ENCODE measurements at regions of chr5 and their contacts with region 1.

Region 1: GRCh38 chr5:150129813-150130492 is 25.7 kb downstream of the PDGFRB start:
- DNase-seq: no peak
- ATAC-seq: peak; percentile 93
- H3K4me3 ChIP-seq: no peak overlapping the region
- H3K27ac ChIP-seq: no peak overlapping the region
- H3K4me1 ChIP-seq: no peaks in the 10 kb centered on the region
- H3K27me3 ChIP-seq: no peaks in the 10 kb centered on the region
- CTCF ChIP-seq: peak; percentile 88 to 92 (median 91)
- EP300 ChIP-seq: no peak
- POLR2A ChIP-seq: no peak
- RAD21 ChIP-seq: peak; percentile 92

Region 2: GRCh38 chr5:150085950-150086715 is 43.8 kb before region 1 on chr5 and contains the start of gene CSF1R:
- CTCF ChIA-PET with region 1: no interaction called
- POLR2A ChIA-PET with region 1: no interaction called
- RAD21 ChIA-PET with region 1: no interaction called
- SMC1A ChIA-PET with region 1: no interaction called
- in situ Hi-C with region 1: no loop called
- intact Hi-C with region 1: no loop called
- DNase-seq: no peak
- ATAC-seq: no peak
- H3K4me3 ChIP-seq: no peak within 1 kb of the TSS
- H3K27ac ChIP-seq: no peak within 1 kb of the TSS
- H3K4me1 ChIP-seq: peaks cover 18% of the 10 kb centered on the region
- H3K27me3 ChIP-seq: no peaks in the 10 kb centered on the region
- CTCF ChIP-seq: no peak
- EP300 ChIP-seq: no peak
- POLR2A ChIP-seq: no peak
- RAD21 ChIP-seq: no peak
- polyA plus RNA-seq, gene CSF1R: 0.35 to 0.38 TPM

Region 3: GRCh38 chr5:150175076-150175935 is 45.4 kb after region 1 on chr5:
- CTCF ChIA-PET with region 1: interaction called, 18 read pairs
- POLR2A ChIA-PET with region 1: no interaction called
- RAD21 ChIA-PET with region 1: interaction called, 5 read pairs
- SMC1A ChIA-PET with region 1: interaction called, 3 read pairs
- in situ Hi-C with region 1: no loop called
- intact Hi-C with region 1: loop called (anchors 2 kb)
- DNase-seq: no peak
- ATAC-seq: peak; percentile 84
- H3K4me3 ChIP-seq: no peak overlapping the region
- H3K27ac ChIP-seq: no peak overlapping the region
- H3K4me1 ChIP-seq: no peaks in the 10 kb centered on the region
- H3K27me3 ChIP-seq: no peaks in the 10 kb centered on the region; a peak in 1 of 4 replicates
- CTCF ChIP-seq: peak; percentile 33 to 62 (median 42); a peak in 5 of 6 replicates
- EP300 ChIP-seq: no peak
- POLR2A ChIP-seq: no peak
- RAD21 ChIP-seq: no peak

Region 4: GRCh38 chr5:150227606-150228273 is 97.8 kb after region 1 on chr5:
- CTCF ChIA-PET with region 1: no interaction called
- POLR2A ChIA-PET with region 1: no interaction called
- RAD21 ChIA-PET with region 1: no interaction called
- SMC1A ChIA-PET with region 1: interaction called, 3 read pairs
- in situ Hi-C with region 1: loop called (anchors 5 kb)
- intact Hi-C with region 1: no loop called
- DNase-seq: no peak
- ATAC-seq: no peak
- H3K4me3 ChIP-seq: no peak overlapping the region
- H3K27ac ChIP-seq: no peak overlapping the region
- H3K4me1 ChIP-seq: no peaks in the 10 kb centered on the region
- H3K27me3 ChIP-seq: no peaks in the 10 kb centered on the region; a peak in 1 of 4 replicates
- CTCF ChIP-seq: no peak
- EP300 ChIP-seq: no peak
- POLR2A ChIP-seq: no peak
- RAD21 ChIP-seq: no peak

Region 5: DNA sequence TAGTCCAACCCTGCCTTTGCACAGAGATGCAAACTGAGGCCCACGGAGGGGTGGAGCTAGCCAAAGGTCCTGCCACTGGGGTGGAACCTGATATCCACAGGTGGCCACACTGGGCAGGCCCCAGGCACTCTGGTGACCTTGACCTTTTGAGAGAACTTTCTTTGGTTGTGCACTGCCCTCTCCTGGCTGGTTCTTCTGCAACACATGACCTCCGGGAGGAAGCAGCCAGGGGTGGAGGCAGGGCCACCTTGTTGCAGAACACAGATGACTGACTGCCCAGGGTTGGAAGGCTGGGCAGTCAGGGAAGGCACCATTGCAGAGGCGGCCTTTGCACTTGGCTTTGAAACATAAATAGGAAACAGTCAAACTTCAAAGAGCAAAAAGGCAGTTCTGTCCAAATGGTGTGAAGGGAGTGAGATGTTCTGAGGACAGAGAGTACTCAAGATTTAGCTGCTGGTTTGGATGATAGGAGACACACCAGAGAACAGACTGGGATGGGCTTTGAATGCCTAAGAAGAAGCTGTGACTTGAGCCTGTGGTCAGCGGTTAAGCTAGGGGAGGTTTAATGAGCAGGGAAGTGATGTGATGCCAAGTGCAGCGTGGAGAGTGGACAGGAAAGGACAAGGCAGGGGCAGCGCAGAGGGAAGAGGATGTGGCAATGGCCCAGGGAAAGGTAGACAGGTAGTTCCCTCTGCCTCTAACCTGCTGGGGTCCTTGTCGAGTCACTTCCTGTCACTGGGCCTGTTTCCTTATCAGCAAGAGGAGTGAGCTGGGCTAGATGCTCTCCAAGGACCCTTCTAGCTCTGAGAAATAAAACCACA is 220.8 kb after region 1 on chr5:
- CTCF ChIA-PET with region 1: interaction called, 5 read pairs
- POLR2A ChIA-PET with region 1: no interaction called
- RAD21 ChIA-PET with region 1: interaction called, 3 read pairs
- SMC1A ChIA-PET with region 1: interaction called, 3 read pairs
- in situ Hi-C with region 1: no loop called
- intact Hi-C with region 1: loop called (anchors 1 kb)
- DNase-seq: peak; percentile 13
- ATAC-seq: peak; percentile 99
- H3K4me3 ChIP-seq: no peak overlapping the region
- H3K27ac ChIP-seq: no peak overlapping the region
- H3K4me1 ChIP-seq: peaks cover 8% of the 10 kb centered on the region; the same call in 1 of the 2 replicates
- H3K27me3 ChIP-seq: no peaks in the 10 kb centered on the region
- CTCF ChIP-seq: peak; percentile 69 to 79 (median 73)
- EP300 ChIP-seq: no peak
- POLR2A ChIP-seq: no peak
- RAD21 ChIP-seq: peak; percentile 74

Measured in GM12878 (cell line).